Mammary epithelial cell (primary cell): ENCODE measurements at regions of chr2 and their contacts with region 1.

Region 1: DNA sequence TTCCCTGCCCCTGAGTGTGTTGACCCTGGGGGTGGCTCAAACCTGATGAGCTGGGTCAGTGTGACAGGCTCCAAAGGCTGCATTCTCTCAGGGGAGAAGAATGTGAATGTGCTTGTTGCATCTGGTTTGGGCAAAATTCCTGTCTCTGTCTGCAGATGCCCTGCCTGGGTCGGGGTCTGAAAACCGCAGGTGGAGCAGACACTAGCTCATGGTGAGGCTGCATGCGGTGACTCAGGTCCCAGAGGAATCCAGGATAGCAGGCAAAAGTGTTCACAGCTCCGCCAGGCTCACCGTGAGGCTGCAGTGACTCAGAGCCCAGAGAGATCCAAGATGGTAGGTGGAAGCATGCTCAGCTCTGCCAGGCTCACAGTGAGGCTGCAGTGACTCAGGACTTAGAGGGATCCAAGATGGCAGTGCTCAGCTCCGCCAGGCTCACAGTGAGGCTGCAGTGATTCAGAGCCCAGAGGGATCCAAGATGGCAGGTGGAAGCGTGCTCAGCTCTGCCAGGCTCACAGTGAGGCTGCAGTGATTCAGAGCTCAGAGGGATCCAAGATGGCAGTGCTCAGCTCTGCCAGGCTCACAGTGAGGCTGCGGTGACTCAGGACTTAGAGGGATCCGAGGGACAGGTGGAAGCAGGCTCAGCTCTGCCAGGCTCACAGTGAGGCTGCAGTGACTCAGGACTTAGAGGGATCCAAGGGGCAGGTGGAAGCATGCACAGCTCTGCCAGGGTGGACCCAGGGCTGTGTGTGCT is 200.5 kb downstream of the ACKR3 start:
- DNase-seq: peak; percentile 99
- H3K4me3 ChIP-seq: no peak overlapping the region
- H3K27ac ChIP-seq: peak overlapping the region; percentile 78
- H3K4me1 ChIP-seq: peaks cover 34% of the 10 kb centered on the region
- H3K27me3 ChIP-seq: no peaks in the 10 kb centered on the region
- CTCF ChIP-seq: no peak

Region 2: DNA sequence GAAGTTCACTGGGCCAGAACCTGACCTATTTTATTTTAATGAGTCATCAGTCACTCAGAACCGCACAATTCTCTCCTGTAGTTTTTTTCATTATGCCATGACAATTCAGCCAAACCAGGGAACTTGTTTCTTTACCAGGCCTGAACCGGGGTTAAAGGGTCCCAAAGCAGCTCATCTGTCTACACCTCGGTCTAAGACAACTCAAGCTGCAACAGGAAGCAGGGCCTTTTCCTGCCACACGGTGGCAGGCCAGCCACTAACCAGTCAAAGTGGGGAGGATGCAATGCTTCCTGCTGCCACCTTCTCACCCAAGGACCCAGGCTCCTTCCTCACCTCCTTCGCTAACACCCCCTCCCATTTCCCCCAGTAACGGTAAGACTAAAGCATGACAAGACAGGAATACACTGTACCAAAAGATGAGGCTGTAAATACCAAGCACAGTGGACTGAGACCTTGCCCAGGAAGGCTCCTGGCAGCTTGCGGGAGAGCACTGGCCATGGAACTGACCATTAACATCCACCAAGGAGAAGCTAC is 257.1 kb before region 1 on chr2:
- CTCF ChIA-PET with region 1: no interaction called
- dilution Hi-C with region 1: no loop called
- in situ Hi-C with region 1: no loop called
- intact Hi-C with region 1: loop called (anchors 5 kb)
- DNase-seq: peak; percentile 29
- H3K4me3 ChIP-seq: no peak overlapping the region
- H3K27ac ChIP-seq: no peak overlapping the region
- H3K4me1 ChIP-seq: no peaks in the 10 kb centered on the region
- H3K27me3 ChIP-seq: no peaks in the 10 kb centered on the region
- CTCF ChIP-seq: peak; percentile 81 to 90

Region 3: GRCh38 chr2:236679884-236680860 is 89.9 kb before region 1 on chr2:
- CTCF ChIA-PET with region 1: no interaction called
- dilution Hi-C with region 1: no loop called
- in situ Hi-C with region 1: no loop called
- intact Hi-C with region 1: loop called (anchors 5 kb)
- DNase-seq: peak; percentile 90
- H3K4me3 ChIP-seq: no peak overlapping the region
- H3K27ac ChIP-seq: peak overlapping the region; percentile 90
- H3K4me1 ChIP-seq: peaks cover 43% of the 10 kb centered on the region
- H3K27me3 ChIP-seq: no peaks in the 10 kb centered on the region
- CTCF ChIP-seq: no peak

Region 4: DNA sequence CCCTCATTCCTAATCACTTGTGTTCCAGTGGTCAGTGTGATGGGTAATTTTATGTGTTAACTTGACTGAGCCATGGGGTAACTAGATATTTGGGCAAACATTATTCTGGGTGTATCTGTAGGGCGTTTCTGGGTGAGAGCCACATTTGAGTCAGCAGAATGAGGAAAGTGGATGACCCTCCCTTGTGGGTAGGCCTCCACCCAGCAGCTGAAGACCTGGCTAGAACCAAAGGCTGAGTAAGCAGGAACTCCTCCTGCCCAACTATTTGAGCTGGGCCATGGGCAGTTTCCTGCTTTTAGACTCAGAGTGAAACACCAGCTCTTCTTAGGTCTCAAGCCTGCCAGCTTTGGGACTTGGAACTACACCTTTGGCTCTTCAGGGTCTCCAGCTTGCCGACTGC is 58.7 kb before region 1 on chr2:
- CTCF ChIA-PET with region 1: no interaction called
- dilution Hi-C with region 1: no loop called
- in situ Hi-C with region 1: no loop called
- intact Hi-C with region 1: loop called (anchors 2 kb)
- DNase-seq: peak; percentile 86
- H3K4me3 ChIP-seq: no peak overlapping the region
- H3K27ac ChIP-seq: no peak overlapping the region
- H3K4me1 ChIP-seq: peaks cover 21% of the 10 kb centered on the region
- H3K27me3 ChIP-seq: no peaks in the 10 kb centered on the region
- CTCF ChIP-seq: no peak

Region 5: GRCh38 chr2:236753606-236754270 is 16.4 kb before region 1 on chr2:
- CTCF ChIA-PET with region 1: no interaction called
- dilution Hi-C with region 1: no loop called
- in situ Hi-C with region 1: no loop called
- intact Hi-C with region 1: loop called (anchors 1 kb)
- DNase-seq: no peak
- H3K4me3 ChIP-seq: no peak overlapping the region
- H3K27ac ChIP-seq: no peak overlapping the region
- H3K4me1 ChIP-seq: peaks cover 35% of the 10 kb centered on the region
- H3K27me3 ChIP-seq: no peaks in the 10 kb centered on the region
- CTCF ChIP-seq: no peak